Left ventricle myocardium inferior (tissue), 1 donor: ENCODE measurements at regions of chr21 and their contacts with region 1.

Region 1: DNA sequence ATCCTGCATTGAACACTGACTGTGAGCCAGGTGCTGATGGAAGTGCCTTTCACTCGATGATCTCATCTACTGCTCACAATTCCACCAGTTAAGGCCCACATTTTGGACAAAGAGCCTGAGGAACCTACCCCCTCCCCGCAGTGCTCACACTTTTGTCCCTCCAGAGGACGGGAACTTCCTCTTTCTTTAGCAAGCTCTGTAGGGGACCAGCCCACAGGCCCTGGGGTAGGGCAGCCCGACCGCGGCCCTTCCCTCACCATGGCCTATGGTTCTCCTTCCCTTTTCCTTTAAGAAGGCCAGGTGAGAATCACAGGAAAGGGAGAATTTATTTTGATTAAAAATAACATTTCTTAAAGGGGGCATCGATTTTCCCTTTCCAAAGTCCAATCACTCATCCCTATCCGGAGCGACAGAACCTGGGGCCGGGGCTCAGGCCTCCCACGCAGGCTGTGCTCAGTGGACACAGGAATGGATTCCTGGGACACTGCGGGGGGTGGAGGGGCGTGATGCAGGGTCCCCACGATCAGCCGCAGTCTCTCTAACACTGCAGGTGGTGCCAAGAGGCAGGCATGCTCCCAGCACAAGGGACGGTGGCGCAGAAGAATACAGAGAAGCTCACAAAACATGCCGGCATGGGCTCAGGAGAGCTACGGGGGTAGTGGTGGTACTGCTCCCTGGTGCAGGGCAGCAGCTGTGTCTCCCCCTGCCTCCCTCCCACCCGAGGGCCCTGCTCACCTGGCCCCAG is 8.9 kb upstream of the KCNE1 start:
- DNase-seq: peak; percentile 40
- H3K4me3 ChIP-seq: no peak overlapping the region
- H3K27ac ChIP-seq: peak overlapping the region; percentile 34
- H3K4me1 ChIP-seq: peaks cover 72% of the 10 kb centered on the region
- H3K27me3 ChIP-seq: no peaks in the 10 kb centered on the region
- CTCF ChIP-seq: no peak

Region 2: GRCh38 chr21:34351786-34352241 is 169.1 kb before region 1 on chr21:
- intact Hi-C with region 1: no loop called
- DNase-seq: peak; percentile 31
- H3K4me3 ChIP-seq: no peak overlapping the region
- H3K27ac ChIP-seq: no peak overlapping the region
- H3K4me1 ChIP-seq: peaks cover 12% of the 10 kb centered on the region
- H3K27me3 ChIP-seq: peaks cover 6% of the 10 kb centered on the region
- CTCF ChIP-seq: peak; percentile 78

Region 3: GRCh38 chr21:34579411-34579810 is 58.5 kb after region 1 on chr21:
- intact Hi-C with region 1: loop called (anchors 2 kb)
- DNase-seq: no peak
- H3K4me3 ChIP-seq: no peak overlapping the region
- H3K27ac ChIP-seq: peak overlapping the region; percentile 91
- H3K4me1 ChIP-seq: peaks cover 96% of the 10 kb centered on the region
- H3K27me3 ChIP-seq: no peaks in the 10 kb centered on the region
- CTCF ChIP-seq: no peak

Region 4: DNA sequence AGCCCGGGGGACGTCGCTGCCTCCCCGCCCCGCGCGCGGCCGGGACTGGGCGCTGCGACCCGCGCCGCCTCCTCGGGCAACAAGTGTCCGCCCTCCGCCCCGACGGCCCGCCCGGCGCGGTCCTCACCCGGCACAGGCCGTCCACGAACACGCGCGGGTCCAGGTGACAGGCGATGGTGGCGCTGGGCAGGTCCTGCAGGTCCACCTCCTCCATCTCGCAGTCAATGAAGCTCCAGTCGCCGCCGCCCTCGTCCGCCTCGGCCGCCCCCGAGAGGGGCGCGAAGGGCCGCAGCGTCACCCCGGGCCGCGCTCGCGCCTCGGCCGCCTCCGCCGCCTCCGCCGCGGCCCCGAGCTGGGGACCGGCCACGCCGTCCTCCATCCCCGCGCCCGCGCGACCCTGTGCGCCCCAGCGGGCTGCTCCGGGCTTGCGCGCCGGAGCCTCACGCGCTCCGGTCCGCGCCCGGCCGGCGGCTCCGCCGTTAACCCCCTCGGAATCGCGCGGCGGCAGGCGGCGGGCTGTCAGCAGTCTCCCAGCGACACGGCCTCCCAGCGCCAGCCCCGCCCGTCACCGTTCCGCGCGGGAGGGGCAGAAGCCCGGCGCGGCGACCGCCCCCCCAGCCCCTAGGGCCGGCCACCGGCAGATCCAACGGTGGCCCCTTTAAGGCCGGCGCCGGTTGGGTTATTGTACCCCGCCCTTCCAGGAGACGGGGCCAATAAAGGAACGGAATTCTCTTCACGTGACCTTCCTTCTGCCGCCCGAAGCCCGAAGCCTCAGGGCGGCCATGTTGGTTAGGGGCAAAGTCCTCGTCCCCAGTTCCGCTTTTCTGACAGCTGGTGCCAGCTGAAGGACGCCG is 93.9 kb after region 1 on chr21 and contains the start of gene RCAN1:
- intact Hi-C with region 1: no loop called
- DNase-seq: peak; percentile 91
- H3K4me3 ChIP-seq: peak within 1 kb of the TSS; percentile 87
- H3K27ac ChIP-seq: peak within 1 kb of the TSS; percentile 91
- H3K4me1 ChIP-seq: peaks cover 68% of the 10 kb centered on the region
- H3K27me3 ChIP-seq: no peaks in the 10 kb centered on the region
- CTCF ChIP-seq: no peak
- total RNA-seq, gene RCAN1: 75.3 TPM